ENCODE measurements at regions of chr6 and their contacts with region 1.

Region 1: GRCh38 chr6:14876778-14877613 is 368.9 kb upstream of the JARID2 start:
- DNase-seq: peak; percentile 64
- H3K4me3 Mint-ChIP-seq: peak overlapping the region; percentile 7
- H3K27ac Mint-ChIP-seq: peak overlapping the region; percentile 84
- H3K4me1 Mint-ChIP-seq: peaks cover 68% of the 10 kb centered on the region
- H3K27me3 Mint-ChIP-seq: no peaks in the 10 kb centered on the region

Region 2: GRCh38 chr6:14117158-14118090 is 759.6 kb before region 1 on chr6 and contains the start of gene CD83:
- CTCF ChIA-PET with region 1: no interaction called
- intact Hi-C with region 1: loop called (anchors 5 kb)
- DNase-seq: peak; percentile 75
- H3K4me3 Mint-ChIP-seq: peak within 1 kb of the TSS; percentile 93
- H3K27ac Mint-ChIP-seq: peak within 1 kb of the TSS; percentile 87
- H3K4me1 Mint-ChIP-seq: peaks cover 36% of the 10 kb centered on the region
- H3K27me3 Mint-ChIP-seq: peaks cover 2% of the 10 kb centered on the region
- total RNA-seq, gene CD83: 11.9 to 13.8 TPM

Region 3: DNA sequence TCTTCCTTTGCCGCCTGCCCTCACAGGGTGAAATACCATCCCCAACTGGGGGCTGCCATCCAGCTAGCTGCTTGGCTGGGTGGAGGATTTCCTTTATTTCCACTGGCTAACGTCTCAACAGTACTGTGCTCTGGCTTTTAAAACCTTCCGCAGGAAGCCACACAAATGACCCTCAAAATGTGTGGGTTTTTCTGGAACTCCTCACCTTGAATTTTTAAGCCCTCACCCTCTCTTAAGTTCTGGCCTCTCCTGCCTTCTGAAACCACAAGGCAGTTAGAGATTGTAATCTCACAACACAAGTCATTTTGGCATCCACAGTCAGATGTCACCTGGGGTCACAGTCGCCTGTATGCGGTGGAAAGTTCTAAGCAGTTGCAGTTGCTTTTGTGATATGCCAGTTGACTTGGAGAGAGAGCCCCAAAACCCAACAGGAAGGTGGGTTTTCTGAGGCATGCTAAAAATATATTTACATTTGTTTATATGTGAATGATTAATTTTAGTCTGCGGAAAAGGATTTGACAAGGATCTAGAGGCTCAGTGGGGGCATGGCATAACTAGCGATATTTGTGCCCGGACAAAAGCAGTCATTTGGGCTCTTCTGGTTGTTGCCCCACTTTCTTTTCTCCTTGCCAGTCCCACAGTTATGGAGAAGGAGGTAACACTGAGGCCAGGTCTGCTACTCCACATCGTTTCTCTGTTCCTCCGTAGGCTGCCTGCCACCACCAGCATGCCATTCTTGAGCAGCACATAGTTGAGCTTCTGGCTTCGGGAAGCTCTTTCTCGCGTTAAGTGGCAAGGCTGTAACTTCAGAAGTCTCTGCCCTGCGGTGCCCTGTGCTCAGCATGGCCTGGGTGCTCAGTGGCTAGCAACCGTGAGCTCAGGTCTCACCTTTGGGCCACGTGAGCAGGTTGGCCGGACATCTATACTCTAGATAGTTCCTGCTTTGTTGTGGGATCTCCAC is 424.1 kb before region 1 on chr6:
- CTCF ChIA-PET with region 1: no interaction called
- intact Hi-C with region 1: loop called (anchors 5 kb)
- DNase-seq: peak; percentile 79
- H3K4me3 Mint-ChIP-seq: no peak overlapping the region
- H3K27ac Mint-ChIP-seq: no peak overlapping the region
- H3K4me1 Mint-ChIP-seq: peaks cover 53% of the 10 kb centered on the region
- H3K27me3 Mint-ChIP-seq: peaks cover 1% of the 10 kb centered on the region

Region 4: DNA sequence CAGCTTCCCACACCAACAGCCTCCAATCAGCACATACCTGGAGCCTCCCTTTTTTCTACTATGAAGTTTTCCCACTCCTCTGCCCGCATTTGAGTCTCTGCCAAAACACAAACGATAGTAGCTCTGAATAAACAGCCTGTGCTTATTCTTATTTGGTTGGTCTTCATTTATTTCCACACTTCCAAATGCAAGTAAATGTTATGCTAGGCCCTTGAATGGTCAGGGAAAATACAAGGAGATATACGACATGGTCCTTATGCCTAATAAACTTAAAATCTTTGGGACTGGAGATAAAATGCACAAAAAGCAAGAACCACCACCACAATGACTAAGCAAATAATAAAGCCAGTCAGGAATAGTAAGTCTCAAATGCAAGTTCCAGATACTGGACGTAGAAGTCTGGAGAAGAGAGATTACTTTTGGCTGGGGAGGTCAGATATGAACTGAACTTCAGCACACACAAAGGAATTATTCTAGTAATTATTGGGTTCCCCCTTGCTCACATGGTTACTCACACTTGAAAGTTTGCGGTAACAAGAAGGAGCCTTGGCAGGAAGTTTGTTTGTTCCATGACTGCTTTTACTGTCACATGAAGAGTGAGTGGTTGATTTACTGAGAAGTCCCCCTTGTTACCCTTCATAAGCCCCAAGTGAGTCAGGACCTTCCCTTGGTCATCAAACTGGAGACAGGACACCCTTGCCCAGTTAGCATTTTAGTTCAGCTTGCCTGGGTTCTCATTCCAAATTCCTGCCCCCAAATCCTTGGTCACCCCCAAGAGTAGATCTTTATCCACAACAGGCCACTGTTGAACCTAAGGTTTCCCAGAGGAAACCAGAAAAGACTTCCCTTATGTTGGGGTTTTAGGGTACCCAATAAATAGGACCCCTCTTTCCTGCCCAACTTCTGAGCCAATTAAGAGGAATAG is 142.3 kb before region 1 on chr6:
- CTCF ChIA-PET with region 1: interaction called, 3 read pairs
- intact Hi-C with region 1: loop called (anchors 1 kb)
- DNase-seq: peak; percentile 74
- H3K4me3 Mint-ChIP-seq: peak overlapping the region; percentile 54
- H3K27ac Mint-ChIP-seq: peak overlapping the region; percentile 96
- H3K4me1 Mint-ChIP-seq: peaks cover 97% of the 10 kb centered on the region
- H3K27me3 Mint-ChIP-seq: no peaks in the 10 kb centered on the region

Region 5: GRCh38 chr6:14851281-14851680 is 25.7 kb before region 1 on chr6:
- CTCF ChIA-PET with region 1: no interaction called
- intact Hi-C with region 1: no loop called
- DNase-seq: no peak
- H3K4me3 Mint-ChIP-seq: no peak overlapping the region
- H3K27ac Mint-ChIP-seq: no peak overlapping the region
- H3K4me1 Mint-ChIP-seq: no peaks in the 10 kb centered on the region
- H3K27me3 Mint-ChIP-seq: no peaks in the 10 kb centered on the region

Region 6: DNA sequence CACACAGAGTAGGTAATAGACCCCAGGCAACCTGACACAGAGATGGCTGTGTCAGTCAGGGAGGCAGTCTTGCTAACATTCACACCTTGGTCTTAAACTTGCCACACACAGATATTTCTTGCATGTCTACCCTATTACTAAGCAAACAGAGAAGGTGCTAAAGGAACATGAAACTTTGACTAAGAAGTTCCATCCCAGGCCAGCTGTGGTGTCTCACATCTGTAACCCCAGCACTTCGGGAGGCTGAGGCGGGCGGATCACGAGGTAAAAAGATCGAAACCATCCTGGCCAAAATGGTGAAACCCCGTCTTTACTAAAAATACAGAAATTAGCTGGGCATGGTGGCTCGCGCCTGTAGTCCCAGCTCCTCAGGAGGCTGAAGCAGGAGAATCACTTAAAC is 146.5 kb after region 1 on chr6:
- CTCF ChIA-PET with region 1: no interaction called
- intact Hi-C with region 1: loop called (anchors 1 kb)
- DNase-seq: peak; percentile 78
- H3K4me3 Mint-ChIP-seq: no peak overlapping the region
- H3K27ac Mint-ChIP-seq: peak overlapping the region; percentile 84
- H3K4me1 Mint-ChIP-seq: peaks cover 20% of the 10 kb centered on the region
- H3K27me3 Mint-ChIP-seq: peaks cover 3% of the 10 kb centered on the region

Region 7: DNA sequence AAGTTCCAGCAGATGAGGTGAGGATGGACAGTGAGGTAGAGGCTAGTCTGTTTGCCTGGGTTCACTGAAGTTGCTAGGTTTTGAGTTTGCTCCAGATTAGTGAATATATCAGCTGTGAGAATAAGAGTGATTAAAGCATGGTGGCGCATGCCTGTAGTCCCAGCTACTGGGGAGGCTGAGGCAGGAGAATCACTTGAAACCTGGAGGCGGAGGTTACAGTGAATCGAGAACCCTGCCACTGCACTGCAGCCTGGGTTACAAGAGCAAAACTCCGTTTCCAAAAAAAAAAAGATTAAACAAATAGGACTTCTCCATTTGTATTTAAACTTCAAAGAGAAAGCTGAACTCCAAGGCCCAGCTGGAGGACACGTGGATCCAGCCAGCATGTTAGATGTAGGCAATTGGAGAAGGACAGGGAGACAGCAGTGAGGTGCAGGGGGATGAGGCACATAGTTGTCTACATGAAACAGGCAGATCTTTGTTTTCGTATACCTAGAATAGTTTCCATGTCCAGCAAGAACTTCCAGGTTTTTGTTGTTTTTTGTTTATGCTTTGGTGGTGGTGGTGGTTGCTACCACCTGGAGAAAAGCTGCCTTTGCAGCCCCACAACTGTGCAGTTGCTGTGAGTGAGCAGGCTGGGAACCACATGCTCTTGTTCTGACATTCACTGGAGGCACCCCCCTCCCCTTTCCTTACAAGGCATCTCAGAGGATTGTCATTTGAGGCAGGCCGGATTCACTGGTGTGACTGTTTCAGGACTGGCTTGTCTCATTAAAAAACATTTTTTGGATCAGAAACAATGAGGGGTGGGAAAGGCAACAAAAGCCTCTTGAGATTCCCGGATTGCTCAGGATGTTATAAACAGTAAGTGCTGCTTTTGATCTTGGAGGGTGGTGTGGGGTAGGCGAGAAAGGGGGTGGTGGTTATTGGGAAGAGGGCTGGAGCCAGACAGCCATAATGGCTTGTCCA is 441.2 kb after region 1 on chr6:
- CTCF ChIA-PET with region 1: no interaction called
- intact Hi-C with region 1: loop called (anchors 5 kb)
- DNase-seq: peak; percentile 72
- H3K4me3 Mint-ChIP-seq: peak overlapping the region; percentile 57
- H3K27ac Mint-ChIP-seq: peak overlapping the region; percentile 84
- H3K4me1 Mint-ChIP-seq: peaks cover 93% of the 10 kb centered on the region
- H3K27me3 Mint-ChIP-seq: no peaks in the 10 kb centered on the region

Region 8: GRCh38 chr6:16136621-16137450 is 1259.8 kb after region 1 on chr6:
- CTCF ChIA-PET with region 1: no interaction called
- intact Hi-C with region 1: loop called (anchors 2 kb)
- DNase-seq: peak; percentile 76
- H3K4me3 Mint-ChIP-seq: peak overlapping the region; percentile 55
- H3K27ac Mint-ChIP-seq: peak overlapping the region; percentile 87
- H3K4me1 Mint-ChIP-seq: peaks cover 70% of the 10 kb centered on the region
- H3K27me3 Mint-ChIP-seq: no peaks in the 10 kb centered on the region

Measured in activated naive CD4-positive, alpha-beta T cell treated with anti-CD3 and anti-CD28 coated beads for 36 hours (primary cell).